WTC11 (cell line): ENCODE measurements at regions of chr11 and their contacts with region 1.

Region 1: DNA sequence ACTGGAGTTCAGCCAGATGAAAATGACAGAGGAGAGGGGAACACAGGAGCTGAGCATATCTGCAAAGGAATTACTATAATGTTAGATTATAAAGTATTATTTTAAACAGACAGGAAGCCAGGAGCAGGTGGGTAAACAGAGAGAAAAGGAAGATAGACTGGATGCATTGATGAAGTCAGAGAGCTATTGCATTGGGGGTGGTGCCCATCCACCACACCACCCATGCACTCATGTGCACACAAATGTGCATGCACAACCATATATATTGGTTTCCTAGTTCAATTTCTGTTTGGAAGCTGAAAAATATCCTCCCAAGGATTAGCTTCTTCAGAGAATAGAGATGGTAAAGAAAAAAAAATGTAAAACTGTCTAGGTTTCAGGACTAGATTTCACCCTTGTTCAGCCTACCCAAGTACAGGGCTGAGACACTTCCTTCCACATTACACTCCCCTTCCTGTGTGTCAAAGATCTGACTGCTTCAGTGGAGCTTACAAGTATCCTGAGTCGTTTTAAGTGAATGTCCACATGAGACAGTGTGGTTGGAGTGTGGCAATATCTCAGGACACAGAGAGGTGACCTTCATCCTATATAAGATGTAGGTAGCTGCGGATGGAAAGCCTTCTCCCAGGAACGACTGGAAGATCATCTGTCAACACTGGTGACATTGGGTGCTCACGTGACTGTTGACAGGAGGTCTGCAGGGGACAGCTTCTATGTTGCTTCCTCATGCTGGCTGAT is 12.2 kb upstream of the SMPD1 start:
- DNase-seq: no peak
- ATAC-seq: no peak
- H3K4me3 Mint-ChIP-seq: no peak overlapping the region
- H3K27ac Mint-ChIP-seq: no peak overlapping the region
- H3K4me1 Mint-ChIP-seq: peaks cover 13% of the 10 kb centered on the region
- H3K27me3 Mint-ChIP-seq: no peaks in the 10 kb centered on the region
- CTCF ChIP-seq: no peak

Region 2: DNA sequence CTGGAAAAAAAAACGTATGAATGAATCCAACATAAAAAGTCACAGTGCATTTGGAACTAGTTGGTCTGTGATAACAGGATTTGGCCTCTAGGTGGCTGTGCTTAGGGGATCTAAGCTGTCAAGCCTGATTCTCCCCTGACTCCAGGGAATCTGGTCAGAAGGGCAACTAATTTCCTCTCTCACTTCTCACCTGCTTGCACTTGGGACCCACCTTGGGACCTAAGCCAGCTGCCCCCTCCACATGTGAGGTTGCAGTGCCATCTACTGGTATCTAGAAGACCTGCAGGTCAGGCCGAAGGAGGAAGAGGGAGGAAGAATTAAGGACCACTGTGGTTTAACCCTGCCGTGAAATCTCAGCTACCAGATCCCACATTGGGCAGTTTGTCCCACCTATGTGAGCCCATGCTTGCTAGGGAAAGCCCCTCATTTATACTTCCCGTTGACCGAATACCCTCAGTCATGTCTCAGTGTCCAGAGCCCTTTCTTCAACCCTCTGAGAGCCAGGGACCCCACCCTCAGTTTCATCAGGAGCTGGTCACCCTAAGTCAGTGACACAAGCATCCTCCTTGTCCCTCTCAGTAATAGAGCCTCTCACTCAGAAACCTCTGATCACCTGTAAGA is 24.6 kb before region 1 on chr11:
- CTCF ChIA-PET with region 1: interaction called, 17 read pairs
- POLR2A ChIA-PET with region 1: no interaction called
- DNase-seq: peak; percentile 82
- ATAC-seq: peak; percentile 99
- H3K4me3 Mint-ChIP-seq: no peak overlapping the region
- H3K27ac Mint-ChIP-seq: no peak overlapping the region
- H3K4me1 Mint-ChIP-seq: peaks cover 5% of the 10 kb centered on the region
- H3K27me3 Mint-ChIP-seq: no peaks in the 10 kb centered on the region
- CTCF ChIP-seq: peak; percentile 97

Region 3: DNA sequence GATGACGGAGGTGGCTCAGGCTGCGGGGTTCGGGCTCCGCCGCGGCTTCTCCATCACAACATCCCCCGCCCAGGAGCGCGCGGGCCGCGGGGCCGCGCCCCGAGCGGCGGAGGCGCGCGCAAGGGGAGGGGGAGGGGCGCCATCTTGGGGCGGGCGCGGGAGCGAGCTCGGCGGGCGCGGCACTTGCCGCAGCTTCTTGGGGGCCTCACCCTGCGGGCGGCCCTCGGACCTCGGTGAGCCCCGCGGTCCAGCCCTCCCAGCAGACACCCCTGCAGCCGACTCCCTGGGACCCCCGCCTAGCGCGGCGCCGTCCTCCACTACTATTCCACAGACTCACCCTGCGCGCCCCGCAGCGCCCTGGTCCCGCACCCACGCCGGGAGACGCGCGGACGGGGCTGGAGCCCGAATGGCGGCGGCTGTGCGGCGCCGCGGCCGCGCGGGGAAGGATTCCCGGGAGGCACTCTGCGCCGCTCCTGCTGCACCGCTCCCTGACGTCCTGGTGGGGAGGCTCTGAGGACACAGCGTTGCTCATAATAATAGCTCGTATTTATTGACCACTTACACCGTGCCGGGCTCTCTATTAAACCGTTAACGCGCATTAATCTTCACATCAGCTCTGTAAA is 41.0 kb after region 1 on chr11 and contains the start of gene APBB1:
- CTCF ChIA-PET with region 1: interaction called, 49 read pairs
- POLR2A ChIA-PET with region 1: no interaction called
- DNase-seq: peak; percentile 68
- ATAC-seq: peak; percentile 78
- H3K4me3 Mint-ChIP-seq: peak within 1 kb of the TSS; percentile 72
- H3K27ac Mint-ChIP-seq: no peak within 1 kb of the TSS
- H3K4me1 Mint-ChIP-seq: peaks cover 3% of the 10 kb centered on the region
- H3K27me3 Mint-ChIP-seq: peaks cover 43% of the 10 kb centered on the region
- CTCF ChIP-seq: no peak
- total RNA-seq, gene APBB1: 32.1 to 33.1 TPM (median 32.7 TPM) in 3 replicates

Region 4: DNA sequence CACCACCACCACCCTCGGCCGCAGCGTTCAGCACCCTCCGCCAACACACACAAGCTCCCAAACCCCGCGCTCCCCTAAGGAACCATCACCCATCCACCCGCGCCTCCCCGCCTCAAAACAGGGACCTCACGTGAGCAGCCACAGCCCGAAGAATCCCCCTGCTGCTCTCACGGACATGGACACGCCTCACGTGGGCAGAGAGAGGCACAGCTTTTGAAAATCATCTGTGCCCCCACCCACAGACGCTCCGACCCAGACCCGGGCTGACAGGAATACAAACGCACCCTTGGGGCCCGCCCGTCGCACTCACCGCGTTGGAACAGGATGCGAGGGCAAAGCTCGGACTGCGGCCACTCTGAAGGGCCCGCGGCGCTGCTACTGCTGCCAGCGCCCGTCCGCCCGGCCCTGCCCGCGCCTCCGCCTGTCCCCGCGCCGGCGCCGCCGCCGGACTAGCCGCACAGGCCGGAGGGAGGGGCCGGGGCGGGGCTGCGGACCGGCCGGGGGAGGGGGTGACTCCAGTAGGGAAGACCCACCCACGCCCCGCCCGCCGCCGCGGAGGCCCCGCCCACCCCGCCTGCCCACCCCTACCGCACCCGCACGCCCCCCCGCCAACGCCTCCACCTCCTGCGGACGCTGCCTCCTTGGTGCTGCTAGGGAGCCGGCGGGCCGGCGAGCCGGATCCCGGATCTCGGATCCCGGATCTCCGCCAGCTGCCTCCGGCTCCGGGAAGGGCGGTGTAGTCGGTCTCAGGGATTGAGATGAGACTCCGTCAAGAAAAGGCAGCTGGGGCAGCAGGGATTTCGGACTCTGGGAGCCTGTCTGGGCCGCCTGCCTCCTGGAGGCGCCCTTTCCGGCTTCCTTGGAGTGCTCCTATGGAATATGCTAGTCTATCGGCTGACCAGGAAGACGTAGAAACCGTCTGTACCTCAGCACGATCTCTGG is 95.7 kb after region 1 on chr11 and contains the start of gene TRIM3:
- CTCF ChIA-PET with region 1: interaction called, 68 read pairs
- POLR2A ChIA-PET with region 1: interaction called, 7 read pairs
- DNase-seq: peak; percentile 91
- ATAC-seq: peak; percentile 49
- H3K4me3 Mint-ChIP-seq: peak within 1 kb of the TSS; percentile 79
- H3K27ac Mint-ChIP-seq: peak within 1 kb of the TSS; percentile 93
- H3K4me1 Mint-ChIP-seq: peaks cover 28% of the 10 kb centered on the region
- H3K27me3 Mint-ChIP-seq: peaks cover 12% of the 10 kb centered on the region
- CTCF ChIP-seq: no peak
- total RNA-seq, gene TRIM3: 16.6 to 21.3 TPM (median 19.0 TPM) in 3 replicates

Region 5: GRCh38 chr11:6505577-6506240 is 127.6 kb after region 1 on chr11:
- CTCF ChIA-PET with region 1: interaction called, 60 read pairs
- POLR2A ChIA-PET with region 1: no interaction called
- DNase-seq: no peak
- ATAC-seq: peak; percentile 89
- H3K4me3 Mint-ChIP-seq: no peak overlapping the region
- H3K27ac Mint-ChIP-seq: peak overlapping the region; percentile 8; the same call in 1 of the 2 replicates
- H3K4me1 Mint-ChIP-seq: no peaks in the 10 kb centered on the region
- H3K27me3 Mint-ChIP-seq: no peaks in the 10 kb centered on the region
- CTCF ChIP-seq: peak; percentile 53; the same call in 1 of the 2 replicates

Region 6: GRCh38 chr11:6572215-6572614 is 194.1 kb after region 1 on chr11:
- CTCF ChIA-PET with region 1: interaction called, 22 read pairs
- POLR2A ChIA-PET with region 1: no interaction called
- DNase-seq: no peak
- ATAC-seq: no peak
- H3K4me3 Mint-ChIP-seq: no peak overlapping the region
- H3K27ac Mint-ChIP-seq: no peak overlapping the region
- H3K4me1 Mint-ChIP-seq: peaks cover 7% of the 10 kb centered on the region
- H3K27me3 Mint-ChIP-seq: no peaks in the 10 kb centered on the region; the same call in 1 of the 2 replicates
- CTCF ChIP-seq: no peak

Region 7: DNA sequence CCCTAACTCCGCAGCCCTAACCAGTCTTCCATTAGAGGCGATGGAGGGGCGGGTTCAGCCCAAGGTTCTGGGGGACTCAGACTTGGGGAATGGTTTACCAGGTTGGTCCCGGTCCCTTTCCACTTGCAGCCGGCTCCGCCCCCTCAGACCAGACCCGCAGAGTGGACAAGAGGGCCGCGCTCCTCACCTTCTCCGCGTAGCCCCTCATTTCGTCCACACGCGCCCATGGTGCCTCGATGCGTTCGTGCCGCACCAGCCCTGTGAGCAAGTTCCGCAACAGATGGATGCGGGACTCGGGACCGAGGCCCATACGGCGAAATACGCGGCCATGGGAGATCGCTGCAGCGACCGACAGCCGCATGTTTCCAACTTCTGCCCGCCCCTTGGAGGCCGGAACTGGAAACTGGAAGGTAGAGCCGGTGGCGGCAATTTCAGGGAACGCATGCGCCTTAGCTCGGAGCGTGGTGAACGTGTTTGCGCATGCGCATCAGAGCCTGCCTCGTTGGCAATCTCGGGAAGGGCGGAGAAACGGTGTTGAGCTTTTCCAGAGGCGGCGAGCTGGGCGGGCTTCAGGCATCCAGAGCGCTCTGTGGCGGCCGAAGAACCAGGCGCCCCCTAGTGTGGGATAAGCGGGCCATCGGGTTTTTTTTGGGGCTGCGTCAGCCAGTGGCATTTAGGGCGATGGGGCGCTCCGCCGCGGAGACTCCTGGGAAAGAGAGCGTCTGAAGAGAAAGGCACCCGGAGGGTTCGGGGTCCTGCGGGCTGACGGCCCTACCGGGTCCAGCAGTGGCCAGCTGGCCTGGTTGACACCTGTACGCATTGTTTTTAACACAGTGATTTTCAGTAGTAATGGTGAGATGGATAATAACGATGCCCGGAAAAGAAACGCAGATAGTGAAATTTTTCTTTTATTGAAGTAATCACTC is 305.1 kb after region 1 on chr11 and contains the start of gene MRPL17:
- CTCF ChIA-PET with region 1: interaction called, 12 read pairs
- POLR2A ChIA-PET with region 1: no interaction called
- DNase-seq: peak; percentile 99
- ATAC-seq: peak; percentile 95
- H3K4me3 Mint-ChIP-seq: peak within 1 kb of the TSS; percentile 99
- H3K27ac Mint-ChIP-seq: peak within 1 kb of the TSS; percentile 100
- H3K4me1 Mint-ChIP-seq: peaks cover 41% of the 10 kb centered on the region
- H3K27me3 Mint-ChIP-seq: no peaks in the 10 kb centered on the region; the same call in none of the 2 replicates
- CTCF ChIP-seq: peak; percentile 72
- total RNA-seq, gene MRPL17: 68.1 to 77.1 TPM (median 70.1 TPM) in 3 replicates